Gastrocnemius medialis (tissue), 4 donors: ENCODE measurements at regions of chr18 and their contacts with region 1.

Region 1: DNA sequence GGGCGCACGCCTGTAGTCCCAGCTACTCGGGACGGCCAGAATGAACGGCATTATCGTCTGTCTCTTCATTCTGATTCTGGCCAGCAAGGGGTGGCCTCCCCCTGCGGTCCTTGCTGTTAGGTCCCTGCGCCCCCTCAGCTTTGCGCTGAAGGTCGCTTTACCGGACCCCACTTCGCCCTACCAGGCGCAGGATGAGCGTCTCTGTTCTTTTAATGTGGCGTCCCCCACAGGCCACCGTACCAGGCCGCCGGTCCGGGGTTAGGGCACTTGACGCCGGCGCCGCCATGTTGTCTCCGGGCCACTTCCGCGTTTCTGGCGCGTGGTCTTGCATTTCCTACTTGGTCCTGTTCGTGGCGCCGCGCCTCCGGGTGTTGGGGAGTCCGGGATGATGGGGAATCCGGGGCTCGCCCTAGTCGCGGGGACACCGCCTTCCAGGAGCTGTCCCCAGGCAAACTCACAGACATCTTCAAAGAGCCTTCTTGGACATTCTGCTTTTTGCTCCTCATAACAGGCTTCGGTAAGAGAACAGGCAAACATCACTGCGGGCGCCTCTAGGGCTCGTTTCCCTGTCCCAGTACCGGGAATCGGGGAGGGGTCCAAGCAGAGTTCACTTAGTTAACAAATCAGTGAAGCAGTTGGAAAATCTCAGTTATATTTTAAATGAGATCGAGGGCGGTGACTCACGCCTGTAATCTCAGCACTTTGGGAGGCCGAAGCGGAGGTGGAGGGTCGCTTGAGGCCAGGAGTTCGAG is 8.5 kb upstream of the NARS1 start:
- DNase-seq: peak; percentile 95
- ATAC-seq: peak; percentile 99 to 100
- H3K4me3 ChIP-seq: peak overlapping the region; percentile 60 to 75 (median 68)
- H3K27ac ChIP-seq: peak overlapping the region; percentile 71 to 86 (median 78)
- H3K4me1 ChIP-seq: peaks cover 0 to 2% of the 10 kb centered on the region in 2 donors
- H3K27me3 ChIP-seq: no peaks in the 10 kb centered on the region
- CTCF ChIP-seq: peak; percentile 60 to 82 (median 62)
- POLR2A ChIP-seq: peak in 1 of 2 donors; percentile 12

Region 2: DNA sequence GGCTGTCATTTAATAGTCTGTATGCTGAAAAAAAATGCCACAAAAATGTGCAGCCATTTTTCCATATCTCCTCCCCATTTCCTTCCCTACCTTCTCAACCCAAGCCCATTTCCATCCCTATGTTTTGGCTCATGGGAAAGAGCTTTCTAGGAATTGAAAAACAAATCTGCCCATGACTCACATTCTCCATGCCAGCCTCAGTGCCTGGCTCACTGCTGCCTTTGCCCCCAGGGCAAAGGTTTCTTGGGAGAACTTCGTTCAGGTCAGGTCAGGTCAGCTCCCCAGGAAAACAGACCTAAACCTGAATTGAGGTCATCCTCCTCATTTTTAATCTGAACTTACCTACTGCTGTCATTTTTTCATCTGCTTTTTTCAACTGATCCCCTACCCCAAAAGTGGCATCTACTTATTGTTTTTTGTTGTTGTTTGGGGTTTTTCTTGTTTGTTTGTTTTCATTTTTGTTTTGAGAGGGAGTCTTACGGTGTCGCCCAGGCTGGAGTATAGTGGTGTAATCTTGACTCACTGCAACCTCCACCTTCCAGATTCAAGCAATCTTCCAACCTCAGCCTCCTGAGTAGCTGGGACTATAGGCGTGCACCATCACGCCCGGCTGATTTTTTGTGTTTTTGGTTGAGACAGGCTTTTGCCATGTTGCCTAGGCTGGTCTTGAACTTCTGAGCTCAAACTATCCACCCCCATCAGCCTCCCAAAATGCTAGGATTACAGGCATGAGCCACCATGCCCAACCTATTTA is 110.3 kb before region 1 on chr18:
- in situ Hi-C with region 1: no loop called
- intact Hi-C with region 1: no loop called
- DNase-seq: no peak
- ATAC-seq: no peak
- H3K4me3 ChIP-seq: no peak overlapping the region
- H3K27ac ChIP-seq: no peak overlapping the region
- H3K4me1 ChIP-seq: no peaks in the 10 kb centered on the region
- H3K27me3 ChIP-seq: no peaks in the 10 kb centered on the region
- CTCF ChIP-seq: no peak
- POLR2A ChIP-seq: no peak

Region 3: DNA sequence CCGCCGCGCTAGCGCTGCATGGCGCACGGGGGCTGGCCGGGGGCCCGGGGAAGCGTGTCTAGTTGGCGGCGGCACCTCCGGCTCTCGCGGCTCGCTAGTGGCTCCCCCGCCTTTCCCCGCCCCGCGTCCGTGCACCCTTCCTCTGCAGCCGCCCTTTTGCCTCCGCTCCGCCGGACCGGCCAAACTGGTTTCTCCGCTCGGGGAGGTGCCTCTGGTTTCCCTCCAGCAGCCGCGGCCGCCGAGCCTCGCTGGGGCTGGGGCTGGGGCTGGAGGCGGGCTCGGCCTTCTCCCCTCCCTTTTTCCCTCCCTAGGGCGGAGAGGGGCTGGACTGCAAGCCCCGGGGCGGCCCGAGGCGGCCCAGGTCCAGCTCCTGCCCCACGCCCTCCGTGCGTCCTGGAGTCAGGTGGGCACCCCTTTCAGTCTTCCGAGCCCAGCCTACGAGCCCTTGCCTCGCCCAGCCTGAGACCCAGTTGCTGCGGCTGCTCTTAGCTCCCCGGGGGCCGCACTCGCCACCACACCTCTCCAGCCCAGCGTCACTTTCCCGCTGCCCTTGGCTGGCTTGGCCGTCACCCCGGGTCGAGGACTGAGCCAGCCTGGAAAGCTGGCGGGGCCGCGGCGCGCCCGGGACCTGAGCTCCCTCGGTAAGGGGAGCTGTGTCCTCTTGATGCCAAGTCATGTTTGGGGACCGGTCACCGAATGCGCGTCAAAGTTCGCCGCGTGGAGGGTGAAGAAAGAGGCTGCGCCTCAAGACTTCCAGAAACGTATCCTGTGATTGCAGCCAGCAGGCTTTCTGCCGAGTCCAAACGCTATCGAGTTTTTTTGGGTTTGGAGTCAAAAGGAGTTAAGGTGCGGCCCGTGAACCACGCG is 173.2 kb after region 1 on chr18 and contains the start of gene ATP8B1:
- in situ Hi-C with region 1: loop called in 1 of 4 experiments (anchors 25 kb)
- intact Hi-C with region 1: no loop called
- DNase-seq: peak; percentile 33 to 45
- ATAC-seq: peak; percentile 68 to 78
- H3K4me3 ChIP-seq: peak within 1 kb of the TSS; percentile 65 to 80 (median 72)
- H3K27ac ChIP-seq: peak within 1 kb of the TSS; percentile 66 to 85 (median 83)
- H3K4me1 ChIP-seq: peaks cover 12 to 38% of the 10 kb centered on the region in 2 donors
- H3K27me3 ChIP-seq: no peaks in the 10 kb centered on the region
- CTCF ChIP-seq: no peak
- POLR2A ChIP-seq: peak; percentile 45 to 57
- total RNA-seq, gene ATP8B1: 1.6 to 4.2 (median 2.6) TPM

Region 4: DNA sequence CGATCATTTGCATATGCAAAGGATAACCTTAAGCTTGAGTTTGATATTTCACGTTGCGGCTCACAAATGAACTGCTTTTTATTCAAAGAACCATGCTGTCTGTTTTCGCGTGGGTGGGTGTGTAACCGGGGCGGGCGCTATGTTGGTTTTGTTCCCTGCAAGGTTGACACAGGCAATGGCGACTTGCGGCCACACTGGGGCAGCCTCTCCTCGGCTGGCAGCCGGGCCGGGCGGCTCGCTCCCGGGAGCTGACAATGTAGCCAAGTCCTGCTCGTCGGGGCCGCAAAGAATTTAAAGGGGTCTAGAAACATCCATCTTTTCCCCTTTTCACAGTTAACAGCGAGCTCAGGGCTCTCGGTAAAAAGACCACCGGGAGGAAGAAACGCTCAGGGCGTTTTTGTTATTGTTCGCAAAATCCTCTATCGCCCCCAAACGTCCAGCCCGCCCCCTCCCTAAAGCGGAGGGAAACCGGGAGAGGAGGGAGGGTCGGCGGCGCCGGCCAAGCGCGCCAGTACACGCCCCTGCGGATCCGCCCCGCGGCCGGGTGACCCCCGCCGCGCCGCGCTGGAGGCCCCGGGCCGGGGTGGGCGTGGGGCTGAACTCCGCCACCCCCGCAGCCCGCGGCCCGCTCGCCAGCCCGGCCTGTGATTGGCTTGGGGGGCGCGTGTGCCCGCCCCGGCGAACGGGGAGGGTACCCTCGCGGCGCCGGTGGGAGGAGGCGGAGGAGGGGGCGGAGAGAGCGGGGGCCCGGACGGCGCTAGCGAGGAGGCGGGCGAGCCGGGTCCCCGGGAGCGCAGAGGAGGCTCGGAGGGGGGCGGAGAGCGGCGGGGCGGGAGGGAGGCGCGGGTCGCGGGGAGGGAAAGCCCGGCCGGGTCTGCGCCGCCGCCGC is 413.6 kb after region 1 on chr18 and contains the start of gene NEDD4L:
- in situ Hi-C with region 1: no loop called
- intact Hi-C with region 1: loop called (anchors 5 kb)
- DNase-seq: peak; percentile 56 to 57
- ATAC-seq: peak; percentile 84 to 87
- H3K4me3 ChIP-seq: peak within 1 kb of the TSS; percentile 61 to 76 (median 67)
- H3K27ac ChIP-seq: peak within 1 kb of the TSS in 3 of 4 donors; percentile 55 to 65 (median 55)
- H3K4me1 ChIP-seq: peaks cover 0 to 16% of the 10 kb centered on the region in 2 donors
- H3K27me3 ChIP-seq: peaks cover 0 to 4% (median 0%) of the 10 kb centered on the region in 3 donors
- CTCF ChIP-seq: peak; percentile 44 to 92 (median 70)
- POLR2A ChIP-seq: peak; percentile 8 to 30
- total RNA-seq, gene NEDD4L: 27.4 to 81.5 (median 51.5) TPM

Region 5: GRCh38 chr18:58128381-58129374 is 498.5 kb after region 1 on chr18:
- in situ Hi-C with region 1: loop called in 3 of 4 experiments (anchors 25 kb)
- intact Hi-C with region 1: loop called (anchors 5 kb)
- DNase-seq: no peak
- ATAC-seq: no peak
- H3K4me3 ChIP-seq: no peak overlapping the region
- H3K27ac ChIP-seq: no peak overlapping the region
- H3K4me1 ChIP-seq: no peaks in the 10 kb centered on the region
- H3K27me3 ChIP-seq: no peaks in the 10 kb centered on the region
- CTCF ChIP-seq: no peak
- POLR2A ChIP-seq: no peak

Region 6: DNA sequence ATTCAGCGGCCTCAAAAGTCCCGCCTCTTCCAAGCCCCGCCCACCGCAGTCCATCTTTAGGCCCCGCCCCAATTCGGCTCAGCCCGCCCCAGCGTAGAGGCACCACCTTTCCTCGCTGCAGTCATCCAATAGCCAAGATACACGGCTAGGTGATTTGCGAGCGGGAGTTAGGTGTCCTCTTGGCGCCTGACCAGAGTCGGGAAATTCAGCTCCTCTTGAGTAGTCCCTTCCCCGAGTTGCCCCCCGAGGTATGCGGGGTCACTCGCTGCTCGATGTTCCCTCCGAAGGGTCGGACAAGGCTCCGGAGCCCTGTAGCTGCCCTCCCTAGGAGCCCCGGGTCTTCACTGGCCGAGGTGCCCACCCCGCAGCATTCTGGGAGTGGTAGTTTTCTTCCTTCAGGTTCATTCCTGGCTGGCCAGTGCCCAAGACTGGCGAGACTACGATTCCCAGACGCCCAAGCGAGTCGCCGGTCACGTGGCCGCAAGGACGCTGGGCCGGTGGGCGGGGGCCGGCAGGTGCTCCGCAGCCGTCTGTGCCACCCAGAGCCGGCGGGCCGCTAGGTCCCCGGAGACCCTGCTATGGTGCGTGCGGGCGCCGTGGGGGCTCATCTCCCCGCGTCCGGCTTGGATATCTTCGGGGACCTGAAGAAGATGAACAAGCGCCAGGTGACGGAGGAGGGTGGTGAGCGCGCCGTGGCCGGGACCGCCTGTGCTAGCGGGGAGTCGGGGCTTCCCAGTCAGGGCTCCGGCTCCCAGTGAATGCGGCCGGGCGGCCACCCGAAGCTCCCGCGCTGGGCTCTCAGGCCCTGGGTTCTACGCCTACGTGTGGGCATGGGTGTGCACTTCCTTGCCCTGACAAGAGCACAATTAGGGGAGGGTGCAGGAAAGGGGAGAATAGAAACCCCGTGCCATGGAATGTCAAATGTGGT is 1509.5 kb after region 1 on chr18 and contains the start of gene SEC11C:
- in situ Hi-C with region 1: no loop called
- intact Hi-C with region 1: loop called (anchors 5 kb)
- DNase-seq: peak; percentile 96 to 97
- ATAC-seq: peak; percentile 97 to 98
- H3K4me3 ChIP-seq: peak within 1 kb of the TSS; percentile 81 to 99 (median 88)
- H3K27ac ChIP-seq: peak within 1 kb of the TSS; percentile 84 to 93 (median 90)
- H3K4me1 ChIP-seq: peaks cover 6 to 20% of the 10 kb centered on the region in 2 donors
- H3K27me3 ChIP-seq: no peaks in the 10 kb centered on the region
- CTCF ChIP-seq: no peak
- POLR2A ChIP-seq: peak; percentile 26 to 46
- total RNA-seq, gene SEC11C: 7.7 to 17.1 (median 13.1) TPM